IMR-90 (cell line): ENCODE measurements at regions of chr21 and their contacts with region 1.

Region 1: DNA sequence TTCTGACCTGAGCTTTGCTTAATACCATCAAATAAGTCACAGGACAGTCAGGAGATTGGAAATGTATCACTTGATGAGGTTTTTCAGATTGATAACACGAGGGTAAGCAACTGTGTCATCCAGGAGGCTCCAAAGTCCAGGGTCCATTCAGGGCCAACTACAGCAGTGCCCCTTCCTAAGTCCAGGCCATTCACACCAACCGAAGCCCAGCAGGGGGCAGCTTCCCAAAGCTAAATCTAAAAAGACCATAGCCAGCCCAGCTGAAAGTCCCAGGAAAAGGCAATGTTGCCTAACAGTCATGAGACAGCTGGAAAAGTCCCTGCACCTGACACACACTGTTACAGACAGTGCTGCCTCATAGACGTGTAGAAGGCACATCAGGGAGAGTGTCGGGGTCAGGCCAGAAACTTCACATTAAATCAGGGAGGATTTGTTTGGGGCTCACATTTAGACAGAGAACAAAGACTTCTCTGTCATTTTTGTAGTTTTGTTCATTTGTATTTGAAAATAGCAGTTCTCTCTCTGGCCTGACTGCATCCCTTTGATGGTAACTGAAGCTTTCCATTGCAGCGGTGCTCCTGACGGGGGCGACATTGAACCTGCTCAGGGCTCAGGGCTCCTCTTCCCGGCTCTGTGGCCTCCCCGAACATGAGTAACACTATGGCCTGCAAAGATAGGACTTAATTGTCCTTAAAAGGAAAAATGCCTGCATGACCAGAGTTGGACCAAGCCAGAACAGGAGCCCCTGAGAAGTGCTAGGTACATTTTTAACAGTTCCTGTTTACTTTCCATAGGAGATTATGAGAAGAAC is 200.4 kb downstream of the NRIP1 start:
- DNase-seq: peak; percentile 86
- ATAC-seq: peak; percentile 83
- H3K4me3 ChIP-seq: no peak overlapping the region
- H3K27ac ChIP-seq: no peak overlapping the region
- H3K4me1 ChIP-seq: peaks cover 17% of the 10 kb centered on the region
- H3K27me3 ChIP-seq: no peaks in the 10 kb centered on the region
- CTCF ChIP-seq: peak; percentile 74
- POLR2A ChIP-seq: no peak
- RAD21 ChIP-seq: peak; percentile 85

Region 2: DNA sequence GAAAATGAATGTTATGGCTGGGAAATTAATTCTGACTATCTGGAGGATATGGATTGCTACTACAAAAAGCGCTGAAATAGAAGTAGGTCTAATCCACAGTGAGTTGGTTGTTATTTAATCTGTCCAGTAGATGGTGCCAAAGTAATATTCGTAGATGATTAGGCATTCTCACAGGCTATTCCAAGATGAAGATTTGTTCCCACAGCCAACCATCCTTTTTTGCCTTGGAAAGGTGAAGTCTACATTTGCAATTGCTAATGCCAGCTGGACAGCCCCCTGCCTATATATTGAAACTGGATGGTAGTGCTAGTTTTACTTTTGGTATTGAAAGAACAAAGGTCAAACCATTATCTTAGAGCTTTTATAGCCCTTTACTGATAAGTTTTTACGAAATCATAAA is 604.7 kb before region 1 on chr21:
- CTCF ChIA-PET with region 1: no interaction called
- POLR2A ChIA-PET with region 1: no interaction called
- dilution Hi-C with region 1: no loop called
- in situ Hi-C with region 1: no loop called
- intact Hi-C with region 1: loop called (anchors 2 kb)
- DNase-seq: peak; percentile 56
- ATAC-seq: peak; percentile 74
- H3K4me3 ChIP-seq: no peak overlapping the region
- H3K27ac ChIP-seq: no peak overlapping the region
- H3K4me1 ChIP-seq: no peaks in the 10 kb centered on the region
- H3K27me3 ChIP-seq: no peaks in the 10 kb centered on the region
- CTCF ChIP-seq: peak; percentile 61
- POLR2A ChIP-seq: no peak
- RAD21 ChIP-seq: peak; percentile 63

Region 3: DNA sequence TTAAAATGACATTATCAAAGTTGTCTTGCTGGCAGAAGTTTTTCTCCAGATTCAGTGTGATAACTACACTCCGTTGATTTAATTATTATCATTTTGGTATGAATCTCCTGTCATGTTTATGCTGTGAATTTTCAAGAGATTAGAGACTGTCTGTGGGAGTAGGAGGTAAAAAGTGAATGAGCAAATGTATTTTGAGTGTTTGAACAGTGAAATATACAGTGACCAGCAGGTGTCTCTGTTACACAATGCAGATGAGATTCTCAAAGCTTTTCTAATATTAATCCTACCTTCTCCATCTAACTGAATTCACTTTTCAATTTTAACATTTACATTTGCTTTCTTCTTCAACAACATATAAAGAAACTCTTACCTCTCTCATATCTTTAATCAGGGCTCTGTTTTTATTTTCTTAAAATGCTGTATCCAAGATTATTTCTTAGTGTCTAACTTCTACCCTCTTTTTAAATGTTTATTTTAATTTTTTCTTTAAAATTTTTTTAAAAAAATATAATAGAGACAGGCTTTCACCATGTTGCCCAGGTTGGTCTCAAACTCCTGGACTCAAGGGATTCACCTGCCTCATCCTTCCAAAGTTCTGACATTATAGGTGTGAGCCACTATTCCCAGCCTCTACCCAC is 460.6 kb before region 1 on chr21:
- CTCF ChIA-PET with region 1: no interaction called
- POLR2A ChIA-PET with region 1: no interaction called
- dilution Hi-C with region 1: no loop called
- in situ Hi-C with region 1: no loop called
- intact Hi-C with region 1: loop called (anchors 5 kb)
- DNase-seq: peak; percentile 45
- ATAC-seq: peak; percentile 69
- H3K4me3 ChIP-seq: no peak overlapping the region
- H3K27ac ChIP-seq: no peak overlapping the region
- H3K4me1 ChIP-seq: no peaks in the 10 kb centered on the region
- H3K27me3 ChIP-seq: no peaks in the 10 kb centered on the region
- CTCF ChIP-seq: peak; percentile 66
- POLR2A ChIP-seq: no peak
- RAD21 ChIP-seq: peak; percentile 66

Region 4: GRCh38 chr21:14956807-14957206 is 92.4 kb after region 1 on chr21:
- CTCF ChIA-PET with region 1: no interaction called
- POLR2A ChIA-PET with region 1: no interaction called
- dilution Hi-C with region 1: no loop called
- in situ Hi-C with region 1: no loop called
- intact Hi-C with region 1: loop called (anchors 5 kb)
- DNase-seq: peak; percentile 85
- ATAC-seq: peak; percentile 73
- H3K4me3 ChIP-seq: no peak overlapping the region
- H3K27ac ChIP-seq: peak overlapping the region; percentile 54; the same call in 1 of the 2 replicates
- H3K4me1 ChIP-seq: peaks cover 18% of the 10 kb centered on the region
- H3K27me3 ChIP-seq: no peaks in the 10 kb centered on the region
- CTCF ChIP-seq: no peak
- POLR2A ChIP-seq: no peak
- RAD21 ChIP-seq: no peak

Region 5: GRCh38 chr21:15015622-15016471 is 151.4 kb after region 1 on chr21:
- CTCF ChIA-PET with region 1: no interaction called
- POLR2A ChIA-PET with region 1: no interaction called
- dilution Hi-C with region 1: no loop called
- in situ Hi-C with region 1: no loop called
- intact Hi-C with region 1: loop called (anchors 2 kb)
- DNase-seq: peak; percentile 91
- ATAC-seq: peak; percentile 73
- H3K4me3 ChIP-seq: no peak overlapping the region
- H3K27ac ChIP-seq: no peak overlapping the region
- H3K4me1 ChIP-seq: peaks cover 4% of the 10 kb centered on the region; the same call in 1 of the 2 replicates
- H3K27me3 ChIP-seq: no peaks in the 10 kb centered on the region
- CTCF ChIP-seq: no peak
- POLR2A ChIP-seq: no peak
- RAD21 ChIP-seq: no peak

Region 6: GRCh38 chr21:15592271-15592860 is 728.0 kb after region 1 on chr21:
- CTCF ChIA-PET with region 1: no interaction called
- POLR2A ChIA-PET with region 1: no interaction called
- dilution Hi-C with region 1: no loop called
- in situ Hi-C with region 1: no loop called
- intact Hi-C with region 1: loop called (anchors 10 kb)
- DNase-seq: peak; percentile 45
- ATAC-seq: peak; percentile 62
- H3K4me3 ChIP-seq: no peak overlapping the region
- H3K27ac ChIP-seq: no peak overlapping the region
- H3K4me1 ChIP-seq: no peaks in the 10 kb centered on the region
- H3K27me3 ChIP-seq: peaks cover 2% of the 10 kb centered on the region
- CTCF ChIP-seq: peak; percentile 69
- POLR2A ChIP-seq: no peak
- RAD21 ChIP-seq: peak; percentile 74